Mammary epithelial cell (primary cell): ENCODE measurements at regions of chr19 and their contacts with region 1.

Region 1: GRCh38 chr19:52690369-52691214 is 44.3 kb downstream of the ZNF611 start:
- DNase-seq: peak; percentile 94
- H3K4me3 ChIP-seq: peak overlapping the region; percentile 91 to 98 (median 96)
- H3K27ac ChIP-seq: peak overlapping the region; percentile 80
- H3K4me1 ChIP-seq: peaks cover 6% of the 10 kb centered on the region
- H3K27me3 ChIP-seq: no peaks in the 10 kb centered on the region
- CTCF ChIP-seq: no peak

Region 2: GRCh38 chr19:52637718-52638585 is 52.6 kb before region 1 on chr19 and contains the start of gene ZNF83:
- CTCF ChIA-PET with region 1: no interaction called
- dilution Hi-C with region 1: no loop called
- in situ Hi-C with region 1: no loop called
- intact Hi-C with region 1: loop called (anchors 5 kb)
- DNase-seq: peak; percentile 93
- H3K4me3 ChIP-seq: peak within 1 kb of the TSS; percentile 49 to 64 (median 55)
- H3K27ac ChIP-seq: peak within 1 kb of the TSS; percentile 66
- H3K4me1 ChIP-seq: peaks cover 3% of the 10 kb centered on the region
- H3K27me3 ChIP-seq: no peaks in the 10 kb centered on the region
- CTCF ChIP-seq: no peak
- total RNA-seq, gene ZNF83: 54.7 to 59.7 TPM

Region 3: GRCh38 chr19:52710538-52710937 is 19.9 kb after region 1 on chr19:
- CTCF ChIA-PET with region 1: no interaction called
- dilution Hi-C with region 1: no loop called
- in situ Hi-C with region 1: no loop called
- intact Hi-C with region 1: no loop called
- DNase-seq: no peak
- H3K4me3 ChIP-seq: no peak overlapping the region
- H3K27ac ChIP-seq: no peak overlapping the region
- H3K4me1 ChIP-seq: no peaks in the 10 kb centered on the region
- H3K27me3 ChIP-seq: no peaks in the 10 kb centered on the region
- CTCF ChIP-seq: no peak

Region 4: GRCh38 chr19:53365134-53365898 is 674.7 kb after region 1 on chr19 and contains the start of gene ZNF525:
- CTCF ChIA-PET with region 1: no interaction called
- dilution Hi-C with region 1: no loop called
- in situ Hi-C with region 1: loop called in 1 of 2 experiments (anchors 25 kb)
- intact Hi-C with region 1: no loop called
- DNase-seq: peak; percentile 89
- H3K4me3 ChIP-seq: peak within 1 kb of the TSS; percentile 75 to 99 (median 79)
- H3K27ac ChIP-seq: peak within 1 kb of the TSS; percentile 88
- H3K4me1 ChIP-seq: peaks cover 4% of the 10 kb centered on the region
- H3K27me3 ChIP-seq: no peaks in the 10 kb centered on the region
- CTCF ChIP-seq: peak in 1 of 2 donors; percentile 11
- total RNA-seq, gene ZNF525: 11.7 to 15.1 TPM